Left ventricle myocardium inferior (tissue), 1 donor: ENCODE measurements at regions of chr11 and their contacts with region 1.

Region 1: DNA sequence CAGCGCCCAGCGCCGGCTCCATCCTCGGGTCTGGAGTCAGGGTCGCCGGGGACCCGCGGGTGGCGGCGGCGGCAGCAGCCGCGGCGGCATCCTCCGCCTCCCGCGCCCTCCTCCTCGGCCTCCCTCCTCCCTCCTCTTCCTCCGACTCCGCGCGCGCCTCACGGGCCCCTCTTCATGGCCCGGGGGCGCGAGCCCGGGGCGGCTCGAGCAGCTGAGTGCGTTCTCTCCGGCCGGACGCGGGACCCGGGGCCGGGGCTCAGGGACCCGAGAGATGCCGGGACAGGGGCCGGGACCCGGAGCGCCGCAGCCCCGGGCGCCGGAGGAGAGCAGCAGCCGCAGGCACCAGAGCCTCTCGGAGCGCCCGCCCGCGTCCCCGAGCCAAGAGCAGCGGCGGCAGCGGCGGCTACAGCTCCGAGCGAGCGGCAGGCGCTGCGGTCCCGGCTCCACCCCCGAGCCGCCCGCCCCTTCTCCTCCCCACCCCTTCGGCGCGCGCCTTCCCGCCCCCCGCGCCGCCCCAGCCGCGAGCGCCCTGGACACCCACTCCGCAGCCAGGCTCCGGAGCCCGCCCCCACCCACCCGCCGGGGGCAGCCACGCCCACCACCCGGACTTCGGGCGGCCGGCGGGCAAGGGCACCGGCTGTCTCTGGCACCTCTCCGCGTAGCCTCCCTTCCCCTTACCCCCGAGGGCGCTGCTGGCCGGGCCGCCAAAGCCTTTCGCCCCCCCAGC is at the start of gene CHST1:
- DNase-seq: peak; percentile 70
- H3K4me3 ChIP-seq: peak within 1 kb of the TSS; percentile 86
- H3K27ac ChIP-seq: peak within 1 kb of the TSS; percentile 64
- H3K4me1 ChIP-seq: peaks cover 58% of the 10 kb centered on the region
- H3K27me3 ChIP-seq: peaks cover 39% of the 10 kb centered on the region
- CTCF ChIP-seq: no peak
- total RNA-seq, gene CHST1: 2.9 TPM

Region 2: GRCh38 chr11:45765836-45766235 is 100.5 kb after region 1 on chr11:
- intact Hi-C with region 1: loop called (anchors 10 kb)
- DNase-seq: no peak
- H3K4me3 ChIP-seq: no peak overlapping the region
- H3K27ac ChIP-seq: peak overlapping the region; percentile 50
- H3K4me1 ChIP-seq: peaks cover 26% of the 10 kb centered on the region
- H3K27me3 ChIP-seq: no peaks in the 10 kb centered on the region
- CTCF ChIP-seq: no peak

Region 3: DNA sequence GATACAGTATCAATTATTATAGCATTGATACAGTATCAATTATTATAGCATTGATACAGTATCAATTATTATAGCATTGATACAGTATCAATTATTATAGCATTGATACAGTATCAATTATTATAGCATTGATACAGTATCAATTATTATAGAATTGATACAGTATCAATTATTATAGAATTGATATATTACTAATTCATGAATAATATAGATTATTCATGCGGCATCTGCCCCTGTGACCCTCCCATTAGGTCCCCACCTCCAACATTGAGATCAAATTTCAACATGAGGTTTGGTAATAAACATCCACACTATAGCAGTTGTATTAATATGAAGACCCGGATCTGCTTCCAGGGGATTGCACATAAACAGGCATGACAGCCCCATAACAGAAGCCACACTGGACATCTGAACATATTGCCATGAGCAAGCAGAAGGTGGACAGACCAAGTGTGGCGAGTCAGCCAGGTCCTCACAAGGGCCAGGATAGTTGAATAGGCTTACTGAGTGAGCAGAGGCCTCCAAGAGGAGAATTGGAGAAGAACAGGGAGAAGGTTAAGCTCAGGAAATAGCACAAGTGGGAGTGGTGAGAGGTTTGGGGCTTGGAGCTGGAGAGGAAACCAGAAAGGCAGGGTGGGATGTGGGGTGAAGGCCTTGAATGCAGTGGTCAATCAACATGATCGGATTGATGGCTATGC is 150.2 kb after region 1 on chr11:
- intact Hi-C with region 1: no loop called
- DNase-seq: no peak
- H3K4me3 ChIP-seq: no peak overlapping the region
- H3K27ac ChIP-seq: no peak overlapping the region
- H3K4me1 ChIP-seq: peaks cover under 1% of the 10 kb centered on the region
- H3K27me3 ChIP-seq: no peaks in the 10 kb centered on the region
- CTCF ChIP-seq: no peak